Heart left ventricle (tissue), 16 donors: ENCODE measurements at regions of chr7 and their contacts with region 1.

Region 1: DNA sequence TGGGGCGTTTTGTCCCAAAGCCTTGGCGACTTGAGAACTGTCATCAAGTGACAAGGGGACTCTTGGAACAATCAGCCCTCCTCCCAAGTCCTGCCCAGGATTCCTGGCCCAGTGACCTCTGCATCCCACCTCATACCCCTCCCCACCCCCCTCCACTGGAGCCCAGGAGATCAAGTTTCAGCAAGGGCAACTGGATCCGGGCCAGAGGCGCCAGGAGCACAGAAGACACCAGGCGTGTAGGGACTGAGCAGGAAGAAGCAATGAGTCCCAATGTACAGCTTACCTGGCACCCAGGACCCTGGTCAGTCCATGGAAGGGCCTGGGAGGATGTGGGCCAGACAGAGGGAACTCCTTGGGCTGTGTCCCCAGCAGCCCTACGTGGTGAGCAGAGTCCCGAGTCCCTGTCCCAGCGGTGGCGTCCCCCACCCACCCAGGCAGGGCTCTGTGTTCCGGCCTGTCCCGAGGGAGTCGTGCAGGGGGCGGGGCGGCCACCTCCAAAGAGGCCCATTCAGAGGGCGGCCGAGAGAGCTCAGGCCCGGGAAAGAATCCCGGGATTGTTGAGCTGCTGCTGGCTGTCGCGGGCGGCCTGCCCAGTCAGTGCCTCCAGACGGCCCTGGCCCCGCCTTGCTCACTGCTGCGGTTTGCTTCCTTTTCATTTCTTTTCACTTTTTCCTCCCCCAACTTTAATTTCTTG is 254.1 kb downstream of the TNS3 start:
- DNase-seq: peak; percentile 90 to 97 (median 94)
- ATAC-seq: peak; percentile 91 to 93 (median 93)
- H3K4me3 ChIP-seq: peak overlapping the region in 11 of 12 donors; percentile 21 to 59 (median 50)
- H3K27ac ChIP-seq: peak overlapping the region; percentile 83 to 95 (median 92)
- H3K4me1 ChIP-seq: peaks cover 15 to 77% (median 57%) of the 10 kb centered on the region in 12 donors
- H3K27me3 ChIP-seq: no peaks in the 10 kb centered on the region
- CTCF ChIP-seq: no peak
- POLR2A ChIP-seq: peak in 1 of 2 donors; percentile 37

Region 2: GRCh38 chr7:46032984-46033383 is 1294.9 kb before region 1 on chr7:
- intact Hi-C with region 1: no loop called
- DNase-seq: no peak
- ATAC-seq: no peak
- H3K4me3 ChIP-seq: no peak overlapping the region
- H3K27ac ChIP-seq: no peak overlapping the region
- H3K4me1 ChIP-seq: peaks cover 0 to 18% (median 0%) of the 10 kb centered on the region in 12 donors
- H3K27me3 ChIP-seq: no peaks in the 10 kb centered on the region
- CTCF ChIP-seq: no peak
- POLR2A ChIP-seq: no peak

Region 3: GRCh38 chr7:47285860-47286522 is 41.9 kb before region 1 on chr7:
- intact Hi-C with region 1: loop called in 5 of 10 experiments (anchors 5 kb)
- DNase-seq: no peak
- ATAC-seq: peak; percentile 27 to 72 (median 52)
- H3K4me3 ChIP-seq: no peak overlapping the region
- H3K27ac ChIP-seq: peak overlapping the region in 10 of 12 donors; percentile 6 to 57 (median 46)
- H3K4me1 ChIP-seq: peaks cover 0 to 26% (median 11%) of the 10 kb centered on the region in 12 donors
- H3K27me3 ChIP-seq: no peaks in the 10 kb centered on the region
- CTCF ChIP-seq: peak in 5 of 12 donors; percentile 15 to 39 (median 25)
- POLR2A ChIP-seq: no peak

Region 4: DNA sequence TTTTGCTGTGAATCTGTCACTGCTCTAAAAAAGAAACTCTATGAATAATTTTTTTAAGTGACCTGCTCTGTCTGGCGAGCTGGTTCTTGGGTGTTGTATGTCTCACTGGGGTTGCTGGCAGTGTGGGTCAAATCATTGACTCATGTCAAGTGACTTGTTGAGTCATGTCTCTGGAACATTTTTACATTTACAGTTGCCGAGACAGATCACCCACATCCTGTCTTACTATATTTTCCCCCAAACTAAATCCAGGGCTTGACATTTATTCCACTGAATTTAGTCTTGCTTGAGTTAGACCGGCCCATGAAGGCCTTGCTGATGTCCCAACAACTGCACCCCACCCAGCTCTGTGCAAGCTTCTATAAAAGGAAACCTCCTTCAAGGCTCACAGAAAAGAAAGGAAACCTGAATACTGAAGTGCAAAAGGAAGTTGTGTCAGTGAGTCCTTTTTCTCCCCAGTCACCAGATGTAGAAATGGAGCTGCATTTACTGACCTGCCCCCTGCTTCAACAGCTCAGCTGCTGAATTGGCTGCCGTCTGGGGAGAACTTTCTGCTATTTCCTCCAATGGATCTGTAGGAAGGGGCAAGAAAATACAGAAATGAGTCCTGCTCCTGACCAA is 36.3 kb before region 1 on chr7:
- intact Hi-C with region 1: loop called in 5 of 10 experiments (anchors 5 kb)
- DNase-seq: no peak
- ATAC-seq: peak in 3 of 4 donors; percentile 11 to 63 (median 45)
- H3K4me3 ChIP-seq: no peak overlapping the region
- H3K27ac ChIP-seq: peak overlapping the region in 8 of 12 donors; percentile 3 to 61 (median 24)
- H3K4me1 ChIP-seq: peaks cover 5 to 59% (median 31%) of the 10 kb centered on the region in 12 donors
- H3K27me3 ChIP-seq: no peaks in the 10 kb centered on the region
- CTCF ChIP-seq: no peak
- POLR2A ChIP-seq: no peak

Region 5: GRCh38 chr7:47301105-47301477 is 26.8 kb before region 1 on chr7:
- intact Hi-C with region 1: loop called in 1 of 10 experiments (anchors 5 kb)
- DNase-seq: no peak
- ATAC-seq: no peak
- H3K4me3 ChIP-seq: no peak overlapping the region
- H3K27ac ChIP-seq: peak overlapping the region in 1 of 12 donors; percentile 31
- H3K4me1 ChIP-seq: peaks cover 0 to 33% (median 13%) of the 10 kb centered on the region in 12 donors
- H3K27me3 ChIP-seq: no peaks in the 10 kb centered on the region
- CTCF ChIP-seq: no peak
- POLR2A ChIP-seq: no peak